ENCODE measurements at regions of chr3 and their contacts with region 1.

Region 1: DNA sequence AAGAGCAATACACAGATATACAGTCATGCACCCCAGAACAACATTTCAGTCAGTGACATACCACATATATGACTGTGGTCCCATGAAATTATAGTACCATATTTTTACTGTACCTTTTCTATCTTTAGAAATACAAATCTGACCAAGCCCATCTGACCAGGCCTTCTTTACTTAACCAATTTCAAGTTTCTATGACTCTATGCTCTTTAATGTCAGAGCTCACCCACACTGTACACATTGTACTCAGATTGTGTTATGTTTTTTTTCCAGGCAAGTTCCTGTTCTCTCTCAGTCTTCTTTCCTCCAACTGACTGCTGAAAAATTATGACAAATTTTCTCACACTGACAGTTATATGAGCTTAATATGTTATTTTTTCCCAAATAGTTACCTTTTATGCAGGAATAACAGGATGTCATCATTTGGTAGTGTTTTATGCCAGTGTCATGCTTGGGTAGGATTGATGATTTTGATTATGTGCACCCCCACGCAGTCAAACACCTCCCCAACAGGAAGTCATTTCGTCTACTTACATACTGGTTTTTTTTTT is 8.0 kb upstream of the CBLB start:
- H3K4me3 Mint-ChIP-seq: no peak overlapping the region
- H3K27ac Mint-ChIP-seq: no peak overlapping the region
- H3K4me1 Mint-ChIP-seq: peaks cover 11% of the 10 kb centered on the region
- H3K27me3 Mint-ChIP-seq: no peaks in the 10 kb centered on the region

Region 2: DNA sequence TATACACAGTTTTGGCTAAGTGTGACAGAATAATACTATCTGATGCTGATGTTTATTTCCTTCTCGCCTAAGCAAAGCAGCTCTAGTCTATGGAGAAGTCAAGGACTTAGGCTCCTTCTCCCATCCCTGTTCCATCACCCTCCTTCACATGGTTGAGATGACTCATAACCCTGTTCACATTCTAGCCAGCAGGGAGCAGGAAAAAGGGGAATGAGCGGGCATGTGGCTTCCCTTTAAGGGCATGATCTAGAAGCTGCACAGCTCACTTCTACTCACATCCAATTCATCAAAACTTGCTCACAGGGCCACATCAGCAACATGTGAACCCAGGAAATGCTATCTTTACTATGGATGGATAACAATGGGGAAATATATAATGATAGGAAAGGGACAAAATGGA is 48.9 kb before region 1 on chr3:
- intact Hi-C with region 1: no loop called
- H3K4me3 Mint-ChIP-seq: no peak overlapping the region
- H3K27ac Mint-ChIP-seq: no peak overlapping the region
- H3K4me1 Mint-ChIP-seq: peaks cover 25% of the 10 kb centered on the region
- H3K27me3 Mint-ChIP-seq: no peaks in the 10 kb centered on the region

Region 3: GRCh38 chr3:106025151-106025722 is 148.4 kb after region 1 on chr3:
- intact Hi-C with region 1: loop called (anchors 10 kb)
- H3K4me3 Mint-ChIP-seq: no peak overlapping the region
- H3K27ac Mint-ChIP-seq: no peak overlapping the region
- H3K4me1 Mint-ChIP-seq: no peaks in the 10 kb centered on the region
- H3K27me3 Mint-ChIP-seq: no peaks in the 10 kb centered on the region